Right ventricle myocardium superior (tissue), 1 donor: ENCODE measurements at regions of chr12 and their contacts with region 1.

Region 1: DNA sequence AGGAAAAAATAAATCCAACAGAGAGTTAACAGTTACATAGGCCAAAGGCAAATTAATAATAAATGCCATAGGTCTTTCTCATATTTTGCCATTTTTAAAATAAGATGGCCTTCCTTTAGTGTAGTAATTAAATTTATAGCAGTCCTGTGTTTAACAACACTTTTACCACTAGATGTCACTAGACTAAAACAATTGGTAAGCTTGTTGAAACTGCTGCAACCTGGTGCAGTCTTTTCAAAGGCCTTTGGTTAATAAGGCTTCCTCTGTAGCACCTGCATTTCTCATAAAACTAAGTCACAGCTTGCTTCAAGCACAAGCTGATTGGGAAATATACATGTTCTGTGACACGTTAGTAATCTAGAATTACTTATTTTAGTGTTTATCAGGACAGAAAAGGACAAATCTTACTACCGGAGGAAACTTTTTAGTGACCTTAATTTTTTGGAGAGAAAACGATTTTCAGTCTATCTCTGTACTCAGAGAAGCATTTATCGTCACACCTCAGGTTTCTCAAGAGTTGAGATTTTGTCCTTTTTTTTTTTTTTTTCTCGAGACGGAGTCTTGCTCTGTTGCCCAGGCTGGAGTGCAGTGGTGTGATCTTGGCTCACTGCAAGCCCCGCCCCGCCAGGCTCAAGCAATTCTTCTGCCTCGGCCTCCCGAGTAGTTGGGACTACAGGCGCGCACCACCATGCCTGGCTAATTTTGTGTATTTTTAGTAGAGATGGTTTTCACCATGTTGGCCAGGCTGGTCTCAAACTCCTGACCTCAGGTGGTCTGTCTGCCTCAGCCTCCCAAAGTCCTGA is 20.0 kb downstream of the BORCS5 start:
- DNase-seq: no peak
- ATAC-seq: peak; percentile 82

Region 2: DNA sequence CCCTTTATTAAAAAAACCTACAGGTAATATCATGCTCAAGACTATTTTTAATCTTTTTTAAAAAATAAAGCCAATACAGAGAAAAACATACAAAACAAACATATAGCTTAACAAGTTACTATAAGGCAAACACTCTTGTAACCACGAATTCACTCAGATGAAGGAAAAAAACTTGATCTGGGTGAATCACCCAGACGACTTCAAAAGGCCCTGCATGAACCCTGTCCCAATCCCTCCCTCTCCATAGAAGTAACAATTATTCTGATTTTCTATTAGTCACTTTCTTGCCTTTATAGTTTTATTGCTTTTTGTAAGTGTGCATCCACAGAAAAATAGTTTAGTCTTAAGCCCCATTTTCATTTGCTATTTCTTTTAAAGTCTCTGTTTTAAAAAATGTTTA is 182.6 kb before region 1 on chr12:
- intact Hi-C with region 1: no loop called
- DNase-seq: no peak
- ATAC-seq: no peak

Region 3: GRCh38 chr12:12562585-12563261 is 185.9 kb after region 1 on chr12 and contains the start of gene DUSP16:
- intact Hi-C with region 1: loop called (anchors 5 kb)
- DNase-seq: peak; percentile 94
- ATAC-seq: peak; percentile 96
- total RNA-seq, gene DUSP16: 12.5 TPM

Region 4: DNA sequence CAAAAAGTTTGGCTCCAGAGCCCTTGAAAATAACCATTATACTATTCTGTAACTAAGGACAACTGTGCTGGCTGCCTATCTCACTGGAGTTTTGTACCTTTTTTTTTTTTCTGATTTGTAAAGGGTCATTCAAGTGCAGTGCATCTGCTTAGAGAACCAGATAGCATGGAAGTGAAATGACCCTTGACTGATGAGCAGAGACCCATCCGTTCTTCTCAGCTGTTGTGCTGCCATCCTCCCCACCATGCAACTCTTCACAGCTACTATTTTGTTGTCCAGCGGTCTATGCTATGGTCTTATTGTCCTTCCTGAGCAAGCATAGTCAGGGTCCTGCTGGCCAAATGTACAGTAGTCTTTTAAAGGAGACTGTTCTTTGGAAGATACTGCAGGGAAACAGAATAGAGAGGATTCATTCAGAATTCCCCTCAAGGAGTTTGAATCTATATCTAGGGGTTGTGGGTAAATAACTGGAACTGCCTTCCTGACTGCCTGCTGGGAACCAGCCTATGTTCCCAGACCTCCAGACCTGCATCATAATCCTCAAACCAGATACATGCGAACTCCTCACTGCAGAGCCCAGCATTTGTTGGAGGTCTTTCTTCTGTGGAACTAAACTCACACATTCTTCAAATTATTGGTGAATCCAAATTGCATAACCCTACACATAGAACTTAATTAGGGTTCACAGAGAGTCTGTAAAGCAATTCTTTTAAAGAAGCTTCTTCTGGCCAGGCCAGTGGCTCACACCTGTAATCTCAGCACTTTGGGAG is 278.0 kb after region 1 on chr12:
- intact Hi-C with region 1: loop called (anchors 5 kb)
- DNase-seq: no peak
- ATAC-seq: no peak

Region 5: DNA sequence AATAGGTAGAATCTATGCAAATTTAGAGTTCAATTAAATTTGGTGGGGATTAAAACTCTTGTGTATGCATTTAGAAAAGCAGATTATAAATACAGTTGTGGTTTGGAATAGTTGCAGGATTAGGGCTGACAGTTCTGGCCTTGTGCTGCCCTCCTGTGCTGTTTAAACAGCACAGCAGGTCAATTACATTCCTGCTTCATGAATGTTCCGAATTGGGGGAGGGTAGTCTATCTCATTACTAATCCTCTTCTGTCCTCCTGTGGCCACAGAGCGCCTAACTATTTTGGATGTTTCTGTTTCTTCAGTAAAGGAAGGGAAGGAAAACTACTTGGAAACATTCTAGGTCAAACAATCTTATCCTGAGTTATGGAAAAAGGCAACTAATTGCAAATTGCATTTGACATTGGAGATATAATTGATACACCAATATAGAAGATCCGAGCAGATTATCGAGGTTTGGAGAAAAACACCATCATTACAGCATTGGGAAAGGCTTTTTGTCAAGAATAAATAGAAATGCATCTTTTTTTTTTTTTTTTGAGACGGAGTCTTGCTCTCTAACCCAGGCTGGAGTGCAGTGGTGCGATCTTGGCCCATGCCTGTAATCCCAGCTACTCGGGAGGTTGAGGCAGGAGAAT is 327.9 kb after region 1 on chr12:
- intact Hi-C with region 1: loop called (anchors 5 kb)
- DNase-seq: no peak
- ATAC-seq: peak; percentile 98